WTC11 (cell line): ENCODE measurements at regions of chr1 and their contacts with region 1.

Region 1: DNA sequence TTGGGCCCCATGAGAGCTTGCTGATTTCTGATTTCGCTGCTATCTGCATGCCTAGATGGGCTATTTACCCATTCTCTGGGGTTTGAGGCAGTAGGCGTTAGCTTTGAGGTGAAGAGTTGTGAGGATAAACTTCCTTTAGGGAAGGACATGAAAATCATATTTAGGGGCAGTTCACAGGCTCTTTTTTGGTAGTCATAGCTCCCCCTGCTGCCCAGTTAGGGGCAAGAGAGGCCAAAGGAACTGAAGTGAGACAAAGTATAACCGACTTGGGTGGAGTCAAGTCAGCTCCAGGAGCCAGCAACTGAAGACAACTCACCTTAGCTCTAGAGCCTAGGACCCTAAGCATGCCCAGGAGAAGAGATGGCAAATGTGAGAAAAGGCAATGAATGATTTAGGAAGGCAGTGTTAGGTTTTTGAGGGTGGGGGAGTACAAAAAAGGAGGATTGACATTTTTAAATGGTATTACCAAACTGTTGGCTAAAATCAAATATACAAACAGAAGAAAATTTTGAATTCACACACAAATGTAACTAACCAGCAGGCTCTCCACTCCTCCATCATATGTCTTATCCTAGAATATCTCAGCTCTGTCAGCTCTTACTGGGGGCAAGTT is 625.2 kb downstream of the LMO4 start:
- DNase-seq: peak; percentile 58
- ATAC-seq: peak; percentile 90
- H3K4me3 Mint-ChIP-seq: no peak overlapping the region
- H3K27ac Mint-ChIP-seq: no peak overlapping the region
- H3K4me1 Mint-ChIP-seq: peaks cover 21% of the 10 kb centered on the region
- H3K27me3 Mint-ChIP-seq: no peaks in the 10 kb centered on the region
- CTCF ChIP-seq: peak; percentile 66

Region 2: DNA sequence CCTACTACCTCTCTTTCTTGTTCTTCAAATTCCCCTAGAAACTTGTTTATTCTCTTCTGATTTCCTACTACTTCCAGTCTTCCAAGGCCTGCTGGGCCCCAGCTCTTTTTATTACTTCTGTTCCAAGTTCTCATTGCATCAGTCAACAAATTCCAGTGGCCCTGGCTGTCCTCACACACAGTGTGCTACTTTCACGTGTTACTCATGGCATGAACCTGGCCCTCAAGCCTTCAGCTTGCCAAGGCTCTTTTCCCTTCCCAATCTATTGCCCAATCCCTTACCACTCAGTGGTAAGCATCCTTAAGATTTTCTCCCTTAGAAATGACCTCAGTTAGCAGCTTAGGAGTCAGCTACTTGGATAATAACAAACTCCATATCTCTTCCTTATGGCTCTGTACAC is 11.7 kb before region 1 on chr1:
- CTCF ChIA-PET with region 1: interaction called, 10 read pairs
- POLR2A ChIA-PET with region 1: no interaction called
- DNase-seq: no peak
- ATAC-seq: no peak
- H3K4me3 Mint-ChIP-seq: no peak overlapping the region
- H3K27ac Mint-ChIP-seq: peak overlapping the region; percentile 24
- H3K4me1 Mint-ChIP-seq: peaks cover 42% of the 10 kb centered on the region
- H3K27me3 Mint-ChIP-seq: no peaks in the 10 kb centered on the region
- CTCF ChIP-seq: no peak

Region 3: GRCh38 chr1:87968197-87968955 is 14.5 kb after region 1 on chr1:
- CTCF ChIA-PET with region 1: interaction called, 14 read pairs
- POLR2A ChIA-PET with region 1: no interaction called
- DNase-seq: peak; percentile 32
- ATAC-seq: peak; percentile 75
- H3K4me3 Mint-ChIP-seq: peak overlapping the region; percentile 35; the same call in 1 of the 2 replicates
- H3K27ac Mint-ChIP-seq: peak overlapping the region; percentile 75
- H3K4me1 Mint-ChIP-seq: peaks cover 45% of the 10 kb centered on the region
- H3K27me3 Mint-ChIP-seq: peaks cover 6% of the 10 kb centered on the region
- CTCF ChIP-seq: no peak

Region 4: DNA sequence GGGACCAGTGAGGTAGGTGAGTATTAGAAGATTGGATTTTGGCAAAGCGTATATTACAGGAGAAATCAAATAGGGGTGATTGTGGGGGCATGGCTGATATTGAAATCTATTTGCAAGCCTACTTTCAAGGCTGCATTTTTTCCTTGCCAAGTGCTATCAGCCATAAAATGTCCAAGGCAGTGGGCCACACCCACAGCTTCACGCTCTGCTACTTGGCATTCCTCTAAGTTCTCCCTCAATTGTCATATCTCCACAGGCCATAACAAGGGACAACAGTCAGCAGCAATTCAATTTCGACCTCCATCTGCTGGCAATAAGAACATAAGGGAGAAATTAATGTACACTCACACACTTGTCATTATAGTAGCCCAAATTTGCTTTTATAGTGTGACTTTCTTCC is 63.1 kb after region 1 on chr1:
- CTCF ChIA-PET with region 1: no interaction called
- POLR2A ChIA-PET with region 1: no interaction called
- DNase-seq: no peak
- ATAC-seq: no peak
- H3K4me3 Mint-ChIP-seq: no peak overlapping the region
- H3K27ac Mint-ChIP-seq: no peak overlapping the region
- H3K4me1 Mint-ChIP-seq: peaks cover 2% of the 10 kb centered on the region
- H3K27me3 Mint-ChIP-seq: no peaks in the 10 kb centered on the region
- CTCF ChIP-seq: no peak

Region 5: GRCh38 chr1:88036316-88037014 is 82.6 kb after region 1 on chr1:
- CTCF ChIA-PET with region 1: no interaction called
- POLR2A ChIA-PET with region 1: no interaction called
- DNase-seq: no peak
- ATAC-seq: no peak
- H3K4me3 Mint-ChIP-seq: no peak overlapping the region
- H3K27ac Mint-ChIP-seq: no peak overlapping the region
- H3K4me1 Mint-ChIP-seq: peaks cover 6% of the 10 kb centered on the region; the same call in 1 of the 2 replicates
- H3K27me3 Mint-ChIP-seq: 0 out of 2 replicates have a peak, but pooled peaks cover 2% of the 10 kb centered on the region
- CTCF ChIP-seq: no peak